AG04449 (cell line): ENCODE measurements at regions of chr13 and their contacts with region 1.

Region 1: DNA sequence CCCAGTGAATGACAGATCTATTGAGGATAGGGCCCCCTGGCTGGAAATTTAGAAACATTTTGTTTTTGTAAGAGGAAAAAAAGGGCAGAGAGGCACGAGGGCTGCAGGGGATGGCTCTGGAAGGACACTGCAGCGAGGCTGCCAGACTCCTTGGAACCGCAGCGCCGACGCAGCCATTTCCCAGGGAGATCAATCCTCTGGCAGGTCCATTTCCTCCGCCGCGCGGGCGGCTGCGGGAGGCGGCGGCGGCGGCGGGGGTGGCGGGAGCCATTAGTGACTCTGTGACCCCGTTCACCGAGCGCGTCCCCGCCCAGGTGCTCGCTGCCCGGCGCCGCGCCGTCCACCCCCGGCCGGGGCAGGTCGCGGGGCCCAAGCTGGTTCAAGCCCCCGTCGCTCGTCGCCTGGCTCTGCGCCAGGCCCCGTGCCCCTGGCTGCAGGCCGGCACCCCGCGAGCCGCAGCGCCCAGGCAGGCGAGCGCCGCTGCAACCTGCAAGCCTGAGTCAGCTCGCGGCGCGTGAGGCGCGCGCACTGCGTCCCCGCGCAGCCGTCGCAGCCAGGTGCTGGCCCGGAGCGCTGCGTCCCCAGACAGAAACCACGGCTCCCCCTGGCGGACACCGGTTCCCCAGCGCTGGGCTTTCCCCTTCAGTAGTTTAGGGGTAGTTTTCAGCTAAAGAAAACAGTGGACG is 192.6 kb downstream of the KATNAL1 start:
- DNase-seq: no peak
- H3K4me3 ChIP-seq: peak overlapping the region; percentile 60
- CTCF ChIP-seq: peak; percentile 95

Region 2: GRCh38 chr13:29508130-29508875 is 606.4 kb before region 1 on chr13:
- CTCF ChIA-PET with region 1: interaction called, 11 read pairs
- POLR2A ChIA-PET with region 1: no interaction called
- DNase-seq: peak; percentile 40
- H3K4me3 ChIP-seq: no peak overlapping the region
- CTCF ChIP-seq: peak; percentile 93

Region 3: GRCh38 chr13:29771247-29771646 is 343.5 kb before region 1 on chr13:
- CTCF ChIA-PET with region 1: interaction called, 256 read pairs
- POLR2A ChIA-PET with region 1: interaction called, 3 read pairs
- DNase-seq: no peak
- H3K4me3 ChIP-seq: no peak overlapping the region
- CTCF ChIP-seq: peak; percentile 4

Region 4: GRCh38 chr13:29801737-29802305 is 312.9 kb before region 1 on chr13:
- CTCF ChIA-PET with region 1: interaction called, 14 read pairs
- POLR2A ChIA-PET with region 1: no interaction called
- DNase-seq: no peak
- H3K4me3 ChIP-seq: no peak overlapping the region
- CTCF ChIP-seq: no peak

Region 5: DNA sequence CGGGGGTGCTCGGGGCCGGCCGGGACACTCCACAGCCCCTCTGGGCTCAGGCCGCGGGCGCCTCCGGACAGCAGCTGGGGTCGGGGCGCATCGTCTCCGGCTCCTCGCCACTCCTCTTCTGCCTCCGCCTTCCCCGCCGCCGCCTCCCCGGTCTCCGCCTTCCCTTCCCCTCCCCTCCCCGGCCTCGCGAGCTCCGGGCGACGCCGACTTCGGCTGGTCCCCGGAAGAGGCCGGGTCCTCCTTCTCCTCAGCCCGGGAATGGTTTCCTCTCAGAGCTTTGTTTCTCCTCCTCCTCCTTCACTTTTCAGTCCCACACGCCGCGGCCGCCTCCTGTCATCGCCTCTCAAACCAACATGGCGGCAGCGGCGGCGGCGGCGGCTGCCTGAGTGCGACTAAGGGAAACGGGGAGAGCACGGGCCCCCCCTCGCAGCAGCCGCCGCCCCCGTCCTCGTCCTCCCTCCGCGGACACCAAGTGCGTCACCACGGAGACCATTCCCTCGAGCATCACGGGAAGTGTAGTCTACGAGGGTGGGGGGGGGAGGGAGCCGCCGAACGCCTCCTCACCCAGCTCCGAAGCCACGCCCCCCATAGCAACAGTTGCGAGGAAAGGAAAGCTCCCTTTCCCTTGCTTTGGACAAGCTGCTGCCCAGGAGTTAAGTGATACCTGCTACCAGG is 264.4 kb before region 1 on chr13 and contains the start of gene UBL3:
- CTCF ChIA-PET with region 1: interaction called, 360 read pairs
- POLR2A ChIA-PET with region 1: interaction called, 7 read pairs
- DNase-seq: peak; percentile 72
- H3K4me3 ChIP-seq: peak within 1 kb of the TSS; percentile 84
- CTCF ChIP-seq: no peak

Region 6: DNA sequence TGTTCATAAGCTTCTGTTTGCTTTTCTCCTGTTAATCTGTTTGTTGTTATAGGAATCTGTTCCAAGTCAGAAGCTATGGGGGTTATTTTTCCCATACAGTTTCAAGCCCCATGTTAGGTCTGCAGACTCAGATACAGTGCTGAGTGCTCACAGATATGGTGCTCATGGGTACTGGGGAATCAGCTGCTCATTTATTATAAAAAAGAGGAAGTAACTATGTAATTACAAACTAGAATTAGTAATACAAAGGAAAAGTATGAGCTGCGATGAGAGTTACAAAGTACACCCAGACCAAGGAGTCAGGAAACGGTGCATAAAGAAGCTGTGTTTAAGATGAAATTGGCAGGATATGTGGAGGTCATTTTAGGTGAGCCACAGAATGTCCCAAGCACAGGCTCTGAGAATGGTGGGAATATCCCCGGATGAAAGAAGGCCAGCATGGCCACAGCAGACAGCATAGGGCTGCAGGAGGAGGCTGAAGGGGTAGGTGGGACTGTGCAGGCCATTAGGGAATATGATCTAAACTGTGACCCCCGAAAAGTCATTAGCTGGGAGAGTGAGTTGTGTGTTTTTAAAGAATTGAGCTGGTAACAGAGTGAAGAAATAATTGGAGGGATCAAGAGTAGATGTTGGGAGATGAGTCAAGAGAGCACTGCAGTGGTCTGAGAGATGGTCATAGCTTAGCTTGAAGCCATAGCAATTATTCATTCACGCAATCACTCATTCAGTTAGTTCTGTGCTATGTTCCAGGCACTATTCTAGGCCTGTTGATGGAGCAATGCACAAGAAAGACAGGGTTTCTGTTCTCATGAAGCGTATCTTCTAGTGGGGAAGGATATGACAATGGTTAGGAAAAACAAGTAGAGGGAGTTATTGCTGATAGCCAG is 86.9 kb before region 1 on chr13:
- CTCF ChIA-PET with region 1: interaction called, 24 read pairs
- POLR2A ChIA-PET with region 1: no interaction called
- DNase-seq: no peak
- H3K4me3 ChIP-seq: no peak overlapping the region
- CTCF ChIP-seq: no peak

Region 7: DNA sequence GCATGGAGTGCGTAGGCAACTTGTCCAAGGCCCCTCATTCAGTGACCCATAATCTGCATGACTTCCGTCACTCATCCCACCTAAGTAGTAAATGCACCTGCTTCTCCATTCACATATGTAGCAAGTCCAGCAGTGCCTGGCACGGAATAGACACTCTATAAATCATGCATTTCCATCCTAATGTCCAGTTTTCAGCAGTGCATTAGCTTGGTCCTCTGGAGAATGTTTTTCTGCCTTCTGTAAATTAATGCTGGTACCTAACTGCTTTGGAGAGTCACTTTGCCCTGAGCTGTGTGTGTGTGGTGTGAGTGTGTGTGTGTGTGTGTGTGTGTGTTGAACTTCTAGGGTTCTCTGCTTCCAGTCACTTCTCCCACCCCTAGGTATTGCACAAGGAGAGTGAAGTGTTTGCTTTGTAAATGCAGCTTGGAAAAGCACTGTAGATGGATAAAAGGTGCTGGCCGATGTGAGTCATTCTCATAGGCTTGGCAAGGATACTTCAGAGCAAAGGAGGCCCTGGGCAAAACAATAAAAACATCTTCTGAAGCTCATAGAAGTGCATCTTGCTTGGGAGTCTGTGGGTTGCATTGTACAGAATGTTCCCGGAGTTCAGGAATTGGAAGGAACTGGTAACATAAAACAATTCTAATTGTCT is 10.8 kb after region 1 on chr13:
- CTCF ChIA-PET with region 1: interaction called, 101 read pairs
- POLR2A ChIA-PET with region 1: no interaction called
- DNase-seq: peak; percentile 75
- H3K4me3 ChIP-seq: no peak overlapping the region
- CTCF ChIP-seq: no peak

Region 8: DNA sequence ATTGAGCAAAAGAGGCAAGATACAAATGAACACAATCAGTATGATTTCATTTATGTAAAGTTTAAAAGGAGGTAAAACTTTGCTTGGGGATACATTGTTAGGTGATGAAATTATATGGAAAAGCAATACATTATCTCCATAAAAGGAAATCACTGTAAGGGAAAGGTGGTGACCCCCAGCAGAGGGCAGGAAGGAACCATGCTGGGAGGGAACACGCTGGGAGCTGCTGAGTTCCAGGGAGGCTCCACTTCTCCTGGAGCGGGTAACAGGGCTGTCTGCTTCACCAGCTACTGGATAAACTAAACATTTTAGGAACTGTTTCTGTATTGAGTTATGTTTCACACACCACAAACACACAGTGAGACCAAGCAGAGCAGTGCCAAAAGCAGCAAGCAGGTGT is 101.4 kb after region 1 on chr13:
- CTCF ChIA-PET with region 1: no interaction called
- POLR2A ChIA-PET with region 1: no interaction called
- DNase-seq: no peak
- H3K4me3 ChIP-seq: no peak overlapping the region
- CTCF ChIP-seq: no peak

Region 9: DNA sequence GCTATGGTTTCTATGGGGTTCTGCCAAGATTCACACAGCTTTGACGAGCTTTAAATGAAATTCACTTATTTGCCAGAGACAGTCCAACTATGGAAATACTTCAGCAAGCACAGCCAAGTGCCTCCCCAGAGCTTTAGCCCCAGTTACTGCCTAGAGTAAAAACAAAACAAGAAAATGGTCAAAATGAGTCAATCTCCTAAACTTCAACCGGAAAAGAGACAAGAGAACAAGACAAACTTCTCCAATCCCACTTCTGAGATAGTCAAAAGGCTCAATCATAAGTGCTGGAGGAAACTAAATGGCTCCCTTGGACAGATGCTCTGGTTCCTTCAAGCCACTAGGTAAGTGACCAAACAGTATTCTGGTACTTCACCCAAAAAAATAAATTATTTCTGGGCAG is 126.8 kb after region 1 on chr13:
- CTCF ChIA-PET with region 1: no interaction called
- POLR2A ChIA-PET with region 1: no interaction called
- DNase-seq: no peak
- H3K4me3 ChIP-seq: no peak overlapping the region
- CTCF ChIP-seq: no peak